Activated T-helper 1 cell treated with anti-CD3 and anti-CD28 coated beads, Interleukin-12 subunit alpha, Interleukin-12 subunit beta, Interleukin-2, Interleukin-4 antibody, amounts not matched to agents 30 ng/mL and 10 ng/mL and 1 ng/mL, durations not matched to agents 14 hours and 24 hours and 36 hours (primary cell): ENCODE measurements at regions of chr7 and their contacts with region 1.

Region 1: GRCh38 chr7:139359366-139360209 is at the start of gene LUC7L2:
- DNase-seq: peak; percentile 99
- H3K4me3 Mint-ChIP-seq: peak within 1 kb of the TSS; percentile 88
- H3K27ac Mint-ChIP-seq: peak within 1 kb of the TSS; percentile 97
- H3K4me1 Mint-ChIP-seq: peaks cover 29% of the 10 kb centered on the region
- H3K27me3 Mint-ChIP-seq: no peaks in the 10 kb centered on the region
- total RNA-seq, gene LUC7L2: 179 and 194 TPM in 2 replicates

Region 2: GRCh38 chr7:139104091-139104450 is 255.5 kb before region 1 on chr7:
- intact Hi-C with region 1: loop called (anchors 1 kb)
- DNase-seq: no peak
- H3K4me3 Mint-ChIP-seq: peak overlapping the region; percentile 87
- H3K27ac Mint-ChIP-seq: peak overlapping the region; percentile 92
- H3K4me1 Mint-ChIP-seq: peaks cover 52% of the 10 kb centered on the region
- H3K27me3 Mint-ChIP-seq: no peaks in the 10 kb centered on the region

Region 3: GRCh38 chr7:139230774-139231512 is 128.6 kb before region 1 on chr7 and contains the start of gene UBN2:
- intact Hi-C with region 1: loop called (anchors 1 kb)
- DNase-seq: peak; percentile 89
- H3K4me3 Mint-ChIP-seq: peak within 1 kb of the TSS; percentile 100
- H3K27ac Mint-ChIP-seq: peak within 1 kb of the TSS; percentile 97
- H3K4me1 Mint-ChIP-seq: peaks cover 32% of the 10 kb centered on the region
- H3K27me3 Mint-ChIP-seq: peaks cover 27% of the 10 kb centered on the region
- total RNA-seq, gene UBN2: 14.7 and 15.6 TPM in 2 replicates

Region 4: DNA sequence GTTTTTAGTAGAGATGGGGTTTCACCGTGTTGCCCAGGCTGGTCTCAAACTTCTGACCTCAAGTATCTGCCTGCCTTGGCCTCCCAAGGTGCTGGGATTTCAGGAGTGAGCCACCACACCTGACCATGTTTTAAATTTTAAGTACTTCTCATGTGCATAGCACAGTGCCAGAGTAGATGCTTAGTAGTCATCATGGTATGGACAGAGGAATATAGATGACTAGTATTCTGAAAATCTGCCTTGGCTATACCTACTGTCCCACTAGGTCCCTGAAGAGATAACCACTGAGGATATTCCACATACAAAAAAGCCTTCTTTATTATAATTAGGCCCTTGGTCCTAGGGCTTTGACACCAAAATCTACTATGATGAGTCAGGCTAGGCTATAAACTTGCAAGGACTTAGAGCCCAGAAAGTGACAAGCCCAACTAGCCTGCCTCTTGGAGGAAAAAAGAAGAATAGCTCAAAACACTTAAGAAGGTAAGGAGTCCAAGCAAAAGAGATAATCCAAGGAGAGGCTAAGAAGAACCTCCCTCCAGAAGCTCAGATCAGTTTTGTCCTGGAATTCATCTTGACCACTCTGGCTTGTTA is 34.1 kb after region 1 on chr7:
- intact Hi-C with region 1: loop called (anchors 5 kb)
- DNase-seq: no peak
- H3K4me3 Mint-ChIP-seq: no peak overlapping the region
- H3K27ac Mint-ChIP-seq: no peak overlapping the region
- H3K4me1 Mint-ChIP-seq: peaks cover 37% of the 10 kb centered on the region
- H3K27me3 Mint-ChIP-seq: no peaks in the 10 kb centered on the region

Region 5: GRCh38 chr7:139441961-139442360 is 82.4 kb after region 1 on chr7:
- intact Hi-C with region 1: no loop called
- DNase-seq: no peak
- H3K4me3 Mint-ChIP-seq: no peak overlapping the region
- H3K27ac Mint-ChIP-seq: no peak overlapping the region
- H3K4me1 Mint-ChIP-seq: no peaks in the 10 kb centered on the region
- H3K27me3 Mint-ChIP-seq: peaks cover 4% of the 10 kb centered on the region

Region 6: DNA sequence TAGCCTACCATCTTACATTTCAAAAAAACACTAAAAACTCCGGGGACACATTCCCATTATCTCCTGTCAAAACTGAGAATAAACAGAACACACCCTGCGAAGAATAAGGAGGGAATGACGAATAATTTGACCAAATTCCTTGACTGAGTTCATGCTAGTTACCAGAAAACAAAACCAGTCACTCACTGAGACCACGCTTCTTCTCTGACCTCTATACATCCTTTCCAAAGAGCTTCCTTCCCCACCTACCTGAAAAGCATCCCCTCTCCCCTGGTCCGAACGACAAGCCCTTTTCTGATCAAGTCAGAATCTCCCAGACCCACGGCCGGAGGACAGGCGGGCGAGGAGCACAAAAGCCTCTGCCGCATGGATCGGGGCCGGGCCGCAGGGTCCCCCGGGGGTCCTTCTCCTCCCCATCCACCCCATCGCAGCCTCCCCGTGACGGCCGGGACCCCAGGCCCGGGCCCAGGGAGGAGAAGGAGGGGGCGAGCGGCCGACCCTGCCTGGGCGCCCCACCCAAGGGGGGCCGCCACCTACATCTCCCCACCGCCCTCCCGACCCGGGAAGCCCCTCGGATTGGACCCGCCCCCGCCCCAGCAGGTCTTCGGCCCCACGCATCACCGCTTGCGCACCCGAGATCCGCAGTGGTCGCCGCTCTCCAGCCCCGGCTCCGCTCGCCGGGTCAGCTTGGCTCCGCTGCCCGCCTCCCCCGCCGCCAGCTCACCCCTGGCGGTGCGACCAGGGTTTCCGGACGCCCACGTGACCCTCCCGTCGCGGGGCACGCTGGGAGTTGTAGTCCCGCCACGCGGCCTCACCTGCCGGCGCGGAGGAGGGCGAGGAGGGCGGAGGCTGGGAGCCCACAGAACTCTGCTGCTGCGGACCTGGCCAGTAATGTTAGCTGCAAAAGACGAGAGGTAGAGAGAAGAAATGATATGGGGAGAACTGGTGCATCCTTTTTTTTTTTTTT is 1038.5 kb after region 1 on chr7 and contains the start of gene SLC37A3:
- intact Hi-C with region 1: loop called (anchors 10 kb)
- DNase-seq: peak; percentile 84
- H3K4me3 Mint-ChIP-seq: peak within 1 kb of the TSS; percentile 99
- H3K27ac Mint-ChIP-seq: peak within 1 kb of the TSS; percentile 96
- H3K4me1 Mint-ChIP-seq: peaks cover 48% of the 10 kb centered on the region
- H3K27me3 Mint-ChIP-seq: no peaks in the 10 kb centered on the region
- total RNA-seq, gene SLC37A3: 169 and 171 TPM in 2 replicates